Common myeloid progenitor, CD34-positive (primary cell): ENCODE measurements at regions of chr3 and their contacts with region 1.

Region 1: DNA sequence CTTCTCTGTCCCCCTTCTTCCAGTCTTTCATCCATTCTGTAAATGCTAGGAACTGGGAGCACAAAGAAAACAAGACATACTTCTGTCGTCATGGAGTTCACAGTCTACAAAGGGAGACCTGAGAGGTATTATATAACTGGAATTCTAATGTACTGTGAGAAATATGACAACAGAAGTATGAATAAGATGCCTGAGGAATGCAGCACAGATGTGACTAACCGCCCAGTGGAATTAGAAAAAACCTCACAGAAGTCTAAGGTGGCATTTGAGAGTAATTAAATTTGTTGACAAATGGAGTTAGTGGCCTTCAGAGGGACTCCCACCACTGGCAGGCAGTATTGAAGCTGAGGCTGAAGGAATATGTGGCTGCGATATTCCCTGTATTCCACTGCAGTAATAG is 168.5 kb upstream of the FAM3D start:
- DNase-seq: no peak
- H3K4me3 ChIP-seq: no peak overlapping the region
- H3K27ac ChIP-seq: no peak overlapping the region
- H3K4me1 ChIP-seq: peaks cover 3 to 13% (median 4%) of the 10 kb centered on the region in 4 experiments
- H3K27me3 ChIP-seq: no peaks in the 10 kb centered on the region

Region 2: DNA sequence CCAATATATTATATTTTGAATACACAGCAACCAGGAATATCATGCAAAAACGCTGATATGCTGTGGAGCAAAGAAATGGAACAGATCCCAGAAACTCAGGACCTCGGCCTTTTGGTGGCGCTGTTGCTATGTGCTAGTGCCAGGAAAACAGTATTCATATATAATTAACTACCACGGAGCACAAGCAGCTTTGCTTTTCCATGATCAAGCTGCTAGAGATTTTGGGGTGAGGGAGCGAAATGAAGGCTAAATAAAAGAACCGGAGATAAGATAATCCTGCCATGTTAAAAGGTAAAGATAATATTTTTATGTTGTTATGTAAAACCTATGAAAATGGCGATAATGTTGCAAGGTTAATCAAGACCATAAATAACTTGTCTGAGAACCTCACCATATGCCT is 10.8 kb before region 1 on chr3:
- CTCF ChIA-PET with region 1: interaction called, 22 read pairs
- POLR2A ChIA-PET with region 1: no interaction called
- DNase-seq: peak; percentile 46 to 70 (median 63)
- H3K4me3 ChIP-seq: no peak overlapping the region
- H3K27ac ChIP-seq: no peak overlapping the region
- H3K4me1 ChIP-seq: peaks cover 0 to 1% (median 0%) of the 10 kb centered on the region in 4 experiments
- H3K27me3 ChIP-seq: no peaks in the 10 kb centered on the region

Region 3: GRCh38 chr3:58874795-58875194 is 39.7 kb after region 1 on chr3:
- CTCF ChIA-PET with region 1: no interaction called
- POLR2A ChIA-PET with region 1: no interaction called
- DNase-seq: peak in 2 of 3 donors; percentile 20 to 36
- H3K4me3 ChIP-seq: no peak overlapping the region
- H3K27ac ChIP-seq: no peak overlapping the region
- H3K4me1 ChIP-seq: peaks cover 0 to 8% (median 0%) of the 10 kb centered on the region in 4 experiments
- H3K27me3 ChIP-seq: no peaks in the 10 kb centered on the region